ENCODE measurements at regions of chr1 and their contacts with region 1.

Region 1: GRCh38 chr1:174519844-174520243 is 72.1 kb downstream of the GPR52 start:
- ATAC-seq: peak in 1 of 8 experiments; percentile 22
- H3K4me3 ChIP-seq: no peak overlapping the region
- H3K27ac ChIP-seq: no peak overlapping the region
- H3K4me1 ChIP-seq: peaks cover 0 to 5% of the 10 kb centered on the region in 2 donors

Region 2: DNA sequence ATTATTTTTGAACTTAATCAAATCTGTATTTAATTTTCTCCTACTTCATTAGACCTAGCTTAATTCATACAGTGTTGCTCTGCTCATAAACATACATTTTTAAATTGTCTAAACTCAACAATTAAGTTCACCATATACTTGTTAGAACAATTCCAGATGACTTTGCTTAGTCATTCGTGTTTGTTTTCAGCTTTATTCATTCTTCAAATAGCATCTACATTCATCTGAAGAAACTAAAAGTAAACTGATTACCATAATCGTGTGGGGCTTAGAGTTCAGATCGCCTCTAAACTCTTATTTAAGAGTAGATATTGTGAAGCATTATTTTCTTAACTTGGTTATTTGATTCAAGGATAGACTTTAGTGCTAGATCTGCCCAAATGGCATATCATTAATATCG is 770.7 kb before region 1 on chr1:
- in situ Hi-C with region 1: no loop called
- ATAC-seq: peak in 2 of 8 experiments; percentile 34 to 64
- H3K4me3 ChIP-seq: no peak overlapping the region
- H3K27ac ChIP-seq: no peak overlapping the region
- H3K4me1 ChIP-seq: no peaks in the 10 kb centered on the region

Region 3: GRCh38 chr1:174572771-174573170 is 52.9 kb after region 1 on chr1:
- in situ Hi-C with region 1: loop called in 1 of 9 experiments (anchors 10 kb)
- ATAC-seq: no peak
- H3K4me3 ChIP-seq: no peak overlapping the region
- H3K27ac ChIP-seq: no peak overlapping the region
- H3K4me1 ChIP-seq: no peaks in the 10 kb centered on the region

Measured in motor neuron (in vitro differentiated cells).